CD8-positive, alpha-beta T cell (primary cell): ENCODE measurements at regions of chr7 and their contacts with region 1.

Region 1: DNA sequence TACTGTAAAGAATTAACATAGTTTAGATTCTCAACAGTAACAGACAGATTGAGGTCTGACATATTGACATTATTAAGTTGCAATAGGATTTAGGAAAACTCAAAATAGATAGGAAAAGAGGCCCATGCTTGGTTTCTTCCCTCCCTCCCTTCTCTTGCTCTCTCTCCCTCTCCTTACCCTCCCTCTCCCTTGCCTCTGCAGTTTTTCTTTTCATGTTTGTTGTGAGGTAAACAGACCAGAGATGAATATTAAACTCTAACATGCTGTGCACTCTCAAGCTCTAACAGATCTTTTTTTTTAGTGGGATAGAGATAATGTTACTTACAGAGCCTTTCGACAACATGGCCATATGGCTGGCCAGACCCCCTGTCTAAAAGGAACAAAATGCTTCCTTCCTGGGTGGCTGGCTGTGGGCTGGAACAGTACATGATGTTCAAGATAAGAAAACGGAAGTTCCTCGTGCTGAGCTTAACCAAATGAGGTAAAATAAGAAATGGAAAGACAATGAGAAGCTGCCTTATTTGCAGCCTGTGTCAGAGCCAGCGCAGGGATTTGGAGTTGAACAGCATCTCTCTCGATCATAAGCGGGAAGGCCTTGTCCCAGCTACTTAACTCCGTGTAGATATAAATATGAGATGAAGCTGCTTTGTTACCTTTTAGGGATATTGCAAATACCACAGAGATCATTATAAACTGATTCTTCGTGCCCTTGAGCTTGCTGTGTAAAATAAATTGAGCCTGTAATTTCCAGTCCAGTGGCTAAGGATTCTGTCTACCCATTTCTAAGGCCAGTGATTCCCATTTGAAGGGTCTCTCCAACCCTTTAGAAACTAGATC is 391.9 kb upstream of the NPVF start:
- DNase-seq: peak in 5 of 9 experiments; percentile 3 to 56 (median 20)
- ATAC-seq: peak; percentile 57
- H3K4me3 ChIP-seq: peak overlapping the region in 1 of 2 experiments; percentile 20
- H3K4me3 Mint-ChIP-seq: peak overlapping the region; percentile 63
- H3K27ac ChIP-seq: peak overlapping the region in 1 of 2 experiments; percentile 37
- H3K27ac Mint-ChIP-seq: peak overlapping the region; percentile 84
- H3K4me1 ChIP-seq: peaks cover 45% of the 10 kb centered on the region
- H3K4me1 Mint-ChIP-seq: peaks cover 57% of the 10 kb centered on the region
- H3K27me3 ChIP-seq: no peaks in the 10 kb centered on the region
- H3K27me3 Mint-ChIP-seq: no peaks in the 10 kb centered on the region
- CTCF ChIP-seq: no peak

Region 2: DNA sequence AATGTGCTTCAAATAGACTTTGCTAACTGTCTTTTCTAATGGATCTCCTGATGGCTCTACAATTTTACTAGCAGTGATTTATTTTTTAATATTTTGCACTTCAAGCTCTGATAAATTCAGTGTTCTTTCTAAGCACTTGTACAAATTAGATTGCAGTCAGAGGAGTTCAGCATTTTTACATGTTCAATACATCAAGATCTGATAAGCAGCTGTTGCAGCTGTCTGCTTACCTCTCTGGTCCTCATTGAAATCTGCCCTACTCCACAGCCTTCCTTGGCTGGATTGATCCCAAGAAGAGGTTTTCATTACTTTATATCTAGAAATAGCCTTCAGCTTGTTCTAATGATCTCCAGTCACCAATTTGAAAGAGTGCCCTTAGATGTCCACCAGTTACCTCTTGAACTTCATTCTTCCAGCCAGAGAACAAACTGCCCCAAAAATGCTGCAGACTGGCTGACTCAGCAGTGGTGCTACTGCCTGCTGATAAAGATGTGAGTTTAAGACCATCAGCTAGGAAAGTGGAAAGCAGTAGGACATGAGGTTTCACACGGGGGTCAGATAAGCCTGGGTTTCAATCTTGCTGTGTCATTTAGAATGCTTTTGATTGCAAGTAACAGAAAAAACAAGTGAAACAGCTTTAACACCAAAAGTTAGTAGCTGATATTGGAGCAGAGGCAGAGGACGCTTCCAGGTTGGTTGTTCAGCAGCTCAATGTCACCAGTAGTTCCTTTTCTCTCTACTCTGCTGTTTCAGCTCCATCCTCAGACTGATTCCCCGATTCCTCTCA is 41.0 kb before region 1 on chr7:
- CTCF ChIA-PET with region 1: no interaction called
- POLR2A ChIA-PET with region 1: no interaction called
- intact Hi-C with region 1: loop called in 1 of 2 experiments (anchors 5 kb)
- DNase-seq: no peak
- ATAC-seq: no peak
- H3K4me3 ChIP-seq: no peak overlapping the region
- H3K4me3 Mint-ChIP-seq: no peak overlapping the region
- H3K27ac ChIP-seq: no peak overlapping the region
- H3K27ac Mint-ChIP-seq: no peak overlapping the region
- H3K4me1 ChIP-seq: no peaks in the 10 kb centered on the region
- H3K4me1 Mint-ChIP-seq: no peaks in the 10 kb centered on the region
- H3K27me3 ChIP-seq: no peaks in the 10 kb centered on the region
- H3K27me3 Mint-ChIP-seq: peaks cover 4% of the 10 kb centered on the region
- CTCF ChIP-seq: no peak

Region 3: DNA sequence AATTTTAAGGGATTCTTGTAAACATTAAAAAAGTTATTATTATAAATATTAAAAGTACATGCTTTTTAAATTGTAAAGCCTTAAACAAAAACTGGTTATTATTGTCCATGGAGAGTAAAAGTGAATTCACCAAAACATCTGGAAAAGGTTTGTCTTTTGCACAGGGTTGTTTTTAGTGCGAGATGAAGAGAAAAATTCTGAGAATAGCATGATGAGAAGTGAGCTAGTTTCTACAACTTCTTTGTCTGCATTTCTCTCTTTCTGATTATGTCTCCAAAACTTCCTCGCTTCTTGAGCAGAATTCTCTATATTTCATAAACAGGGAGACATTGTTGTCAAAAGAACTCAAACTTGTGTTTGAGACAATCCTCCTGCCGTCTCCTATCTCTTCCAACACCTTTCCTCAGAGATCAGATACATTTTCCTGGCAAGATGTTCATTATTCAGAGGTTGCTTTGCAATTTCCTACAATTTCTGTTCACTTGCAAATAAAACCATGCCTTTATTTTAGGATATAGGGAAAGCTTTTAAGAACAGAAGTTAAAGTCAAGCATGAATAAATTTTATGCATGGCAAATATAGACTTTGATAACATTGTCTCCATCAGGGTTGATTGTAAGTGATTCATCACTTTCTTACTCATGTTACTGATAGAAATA is 19.8 kb before region 1 on chr7:
- CTCF ChIA-PET with region 1: no interaction called
- POLR2A ChIA-PET with region 1: no interaction called
- intact Hi-C with region 1: loop called in 1 of 2 experiments (anchors 2 kb)
- DNase-seq: no peak
- ATAC-seq: no peak
- H3K4me3 ChIP-seq: no peak overlapping the region
- H3K4me3 Mint-ChIP-seq: no peak overlapping the region
- H3K27ac ChIP-seq: no peak overlapping the region
- H3K27ac Mint-ChIP-seq: no peak overlapping the region
- H3K4me1 ChIP-seq: no peaks in the 10 kb centered on the region
- H3K4me1 Mint-ChIP-seq: no peaks in the 10 kb centered on the region
- H3K27me3 ChIP-seq: no peaks in the 10 kb centered on the region
- H3K27me3 Mint-ChIP-seq: no peaks in the 10 kb centered on the region
- CTCF ChIP-seq: no peak

Region 4: GRCh38 chr7:25820432-25821040 is 200.4 kb after region 1 on chr7:
- CTCF ChIA-PET with region 1: no interaction called
- POLR2A ChIA-PET with region 1: no interaction called
- intact Hi-C with region 1: no loop called
- DNase-seq: no peak
- ATAC-seq: no peak
- H3K4me3 ChIP-seq: no peak overlapping the region
- H3K4me3 Mint-ChIP-seq: no peak overlapping the region
- H3K27ac ChIP-seq: no peak overlapping the region
- H3K27ac Mint-ChIP-seq: no peak overlapping the region
- H3K4me1 ChIP-seq: no peaks in the 10 kb centered on the region
- H3K4me1 Mint-ChIP-seq: no peaks in the 10 kb centered on the region
- H3K27me3 ChIP-seq: peaks cover 4 to 5% of the 10 kb centered on the region in 2 experiments
- H3K27me3 Mint-ChIP-seq: peaks cover 34% of the 10 kb centered on the region
- CTCF ChIP-seq: peak; percentile 11